ENCODE measurements at regions of chr5 and their contacts with region 1.

Region 1: GRCh38 chr5:18932081-18932480 is 1055.9 kb downstream of the CDH18 start:
- DNase-seq: no peak
- ATAC-seq: no peak
- H3K4me3 ChIP-seq: no peak overlapping the region
- H3K4me3 Mint-ChIP-seq: no peak overlapping the region
- H3K27ac ChIP-seq: no peak overlapping the region
- H3K27ac Mint-ChIP-seq: no peak overlapping the region
- H3K4me1 ChIP-seq: no peaks in the 10 kb centered on the region
- H3K4me1 Mint-ChIP-seq: no peaks in the 10 kb centered on the region
- H3K27me3 ChIP-seq: no peaks in the 10 kb centered on the region
- H3K27me3 Mint-ChIP-seq: no peaks in the 10 kb centered on the region

Region 2: DNA sequence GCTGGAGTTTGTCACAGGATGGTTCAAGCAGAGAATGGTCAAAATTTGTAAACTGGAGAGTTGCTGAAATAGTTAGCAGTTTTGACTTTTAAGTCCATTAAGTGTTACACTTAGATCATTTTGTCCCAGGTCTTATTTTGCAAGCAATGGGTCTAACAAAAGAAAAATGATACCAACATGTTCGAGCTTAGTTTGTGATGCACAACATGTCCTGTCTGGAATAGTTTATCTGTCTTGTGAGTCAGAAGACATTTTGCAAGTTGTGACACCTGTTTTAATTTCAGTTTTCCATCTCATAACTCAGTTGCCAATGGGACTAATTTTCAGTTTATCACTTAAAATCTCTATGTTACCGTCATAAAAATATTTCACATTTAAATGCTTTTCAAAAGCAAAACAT is 126.1 kb after region 1 on chr5:
- CTCF ChIA-PET with region 1: no interaction called
- POLR2A ChIA-PET with region 1: no interaction called
- intact Hi-C with region 1: loop called in 1 of 2 experiments (anchors 5 kb)
- DNase-seq: no peak
- ATAC-seq: no peak
- H3K4me3 ChIP-seq: no peak overlapping the region
- H3K4me3 Mint-ChIP-seq: no peak overlapping the region
- H3K27ac ChIP-seq: no peak overlapping the region
- H3K27ac Mint-ChIP-seq: no peak overlapping the region
- H3K4me1 ChIP-seq: no peaks in the 10 kb centered on the region
- H3K4me1 Mint-ChIP-seq: no peaks in the 10 kb centered on the region
- H3K27me3 ChIP-seq: no peaks in the 10 kb centered on the region
- H3K27me3 Mint-ChIP-seq: no peaks in the 10 kb centered on the region

Region 3: DNA sequence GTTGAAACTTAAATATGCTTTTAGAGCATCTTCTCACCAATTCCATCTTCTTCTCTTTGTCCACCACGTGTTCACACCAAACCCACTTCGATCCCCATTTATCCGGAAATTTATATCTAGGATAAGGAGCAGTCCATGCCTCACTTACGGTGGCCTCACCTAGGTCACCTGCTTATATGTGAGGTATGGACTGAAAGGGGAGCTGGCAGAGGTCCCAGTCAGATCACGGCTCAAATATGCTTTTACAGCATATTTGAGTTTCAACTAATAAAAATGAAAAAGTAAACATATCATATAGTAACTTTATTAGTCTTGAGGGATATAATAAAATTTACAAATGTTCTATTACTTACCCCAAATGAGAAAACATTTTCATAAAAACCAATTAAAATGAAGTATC is 547.5 kb after region 1 on chr5:
- CTCF ChIA-PET with region 1: no interaction called
- POLR2A ChIA-PET with region 1: no interaction called
- intact Hi-C with region 1: no loop called
- DNase-seq: no peak
- ATAC-seq: no peak
- H3K4me3 ChIP-seq: no peak overlapping the region
- H3K4me3 Mint-ChIP-seq: no peak overlapping the region
- H3K27ac ChIP-seq: no peak overlapping the region
- H3K27ac Mint-ChIP-seq: no peak overlapping the region
- H3K4me1 ChIP-seq: no peaks in the 10 kb centered on the region
- H3K4me1 Mint-ChIP-seq: no peaks in the 10 kb centered on the region
- H3K27me3 ChIP-seq: no peaks in the 10 kb centered on the region
- H3K27me3 Mint-ChIP-seq: no peaks in the 10 kb centered on the region